Psoas muscle (tissue), 8 donors: ENCODE measurements at regions of chr16 and their contacts with region 1.

Region 1: DNA sequence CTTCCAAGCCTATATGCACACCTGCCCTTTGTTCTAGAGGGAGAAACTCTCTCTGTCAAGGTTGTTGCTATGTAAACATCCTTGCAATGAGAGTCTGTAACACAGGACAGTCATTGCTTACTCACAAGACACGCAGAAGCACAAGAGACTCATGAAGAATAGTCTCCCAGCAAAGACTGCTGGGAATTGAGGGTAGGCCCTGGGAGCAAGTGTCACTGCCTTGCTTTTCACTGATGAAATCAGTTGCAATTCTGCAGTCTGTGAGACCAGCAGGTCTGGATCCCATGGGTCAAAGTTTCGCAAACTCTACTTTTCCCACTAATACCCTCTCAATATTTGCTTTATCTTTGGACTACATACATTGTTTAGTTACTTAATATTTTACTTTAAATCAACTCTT is 177.4 kb downstream of the FTO start:
- DNase-seq: no peak
- ATAC-seq: no peak
- H3K4me3 ChIP-seq: no peak overlapping the region
- H3K27ac ChIP-seq: no peak overlapping the region
- H3K4me1 ChIP-seq: no peaks in the 10 kb centered on the region
- H3K27me3 ChIP-seq: no peaks in the 10 kb centered on the region
- CTCF ChIP-seq: no peak

Region 2: DNA sequence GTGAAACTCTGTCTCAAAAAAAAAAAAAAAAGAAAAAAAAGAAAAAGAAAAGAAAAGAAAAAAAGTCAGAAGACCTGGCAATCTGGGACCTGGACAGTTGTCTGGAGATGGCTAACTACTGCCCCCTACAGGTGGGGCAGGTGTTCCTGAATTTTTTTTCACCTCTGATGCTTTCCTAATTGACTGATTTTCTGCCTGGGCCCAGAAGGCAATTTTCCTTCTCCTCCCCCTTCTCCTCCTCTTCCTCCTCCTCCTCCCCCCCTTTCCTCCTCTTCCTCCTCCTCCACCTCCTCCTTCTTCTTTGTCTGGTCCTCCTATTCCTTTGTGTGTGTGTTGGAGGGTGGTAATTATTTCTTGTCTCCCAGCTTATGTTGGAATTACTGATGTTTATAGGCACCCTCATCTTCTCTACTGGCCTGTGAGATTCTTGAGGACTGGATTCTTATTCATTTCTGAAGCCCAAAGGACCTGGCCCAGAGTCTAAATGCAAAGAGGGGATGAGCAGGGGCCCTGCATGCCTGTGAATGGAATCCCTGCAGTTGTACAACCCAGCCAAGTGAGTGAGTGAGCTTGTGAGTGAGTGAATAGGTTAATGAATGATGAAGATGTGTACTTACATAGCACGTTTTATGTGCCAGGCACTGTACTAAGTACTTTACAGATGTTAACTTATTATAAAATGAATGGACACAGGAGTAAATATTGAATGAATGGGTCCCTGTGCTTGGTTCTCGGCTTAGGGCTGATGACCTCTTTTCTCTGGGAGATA is 1076.2 kb after region 1 on chr16:
- intact Hi-C with region 1: loop called in 1 of 2 experiments (anchors 10 kb)
- DNase-seq: no peak
- ATAC-seq: peak in 1 of 4 donors; percentile 65
- H3K4me3 ChIP-seq: no peak overlapping the region
- H3K27ac ChIP-seq: no peak overlapping the region
- H3K4me1 ChIP-seq: no peaks in the 10 kb centered on the region
- H3K27me3 ChIP-seq: no peaks in the 10 kb centered on the region
- CTCF ChIP-seq: peak; percentile 56